Thyroid gland (tissue), 4 donors: ENCODE measurements at regions of chr6 and their contacts with region 1.

Region 1: GRCh38 chr6:3277851-3278416 is 19.2 kb downstream of the PSMG4 start:
- DNase-seq: no peak
- H3K4me3 ChIP-seq: no peak overlapping the region
- H3K27ac ChIP-seq: no peak overlapping the region
- H3K4me1 ChIP-seq: peaks cover 0 to 6% of the 10 kb centered on the region in 2 donors
- H3K27me3 ChIP-seq: no peaks in the 10 kb centered on the region
- CTCF ChIP-seq: no peak
- POLR2A ChIP-seq: no peak

Region 2: GRCh38 chr6:3456755-3457466 is 179.0 kb after region 1 on chr6 and contains the start of gene SLC22A23:
- intact Hi-C with region 1: loop called (anchors 5 kb)
- DNase-seq: peak; percentile 83 to 85
- H3K4me3 ChIP-seq: peak within 1 kb of the TSS; percentile 54 to 69 (median 65)
- H3K27ac ChIP-seq: peak within 1 kb of the TSS in 2 of 3 donors; percentile 12 to 31
- H3K4me1 ChIP-seq: peaks cover 16 to 32% of the 10 kb centered on the region in 2 donors
- H3K27me3 ChIP-seq: no peaks in the 10 kb centered on the region
- CTCF ChIP-seq: peak in 5 of 6 experiments; percentile 58 to 93 (median 72)
- POLR2A ChIP-seq: peak in 1 of 2 donors; percentile 79
- total RNA-seq, gene SLC22A23: 16.6 to 21.8 (median 17.6) TPM

Region 3: GRCh38 chr6:3732345-3733141 is 454.6 kb after region 1 on chr6:
- intact Hi-C with region 1: loop called (anchors 2 kb)
- DNase-seq: peak; percentile 65 to 75
- H3K4me3 ChIP-seq: no peak overlapping the region
- H3K27ac ChIP-seq: peak overlapping the region in 1 of 3 donors; percentile 3
- H3K4me1 ChIP-seq: peaks cover 0 to 19% of the 10 kb centered on the region in 2 donors
- H3K27me3 ChIP-seq: no peaks in the 10 kb centered on the region
- CTCF ChIP-seq: peak; percentile 72 to 86 (median 82)
- POLR2A ChIP-seq: no peak

Region 4: GRCh38 chr6:3990692-3991501 is 713.0 kb after region 1 on chr6:
- intact Hi-C with region 1: loop called (anchors 10 kb)
- DNase-seq: peak; percentile 92 to 93
- H3K4me3 ChIP-seq: peak overlapping the region in 2 of 3 donors; percentile 31 to 34
- H3K27ac ChIP-seq: peak overlapping the region; percentile 84 to 91 (median 90)
- H3K4me1 ChIP-seq: peaks cover 15 to 33% of the 10 kb centered on the region in 2 donors
- H3K27me3 ChIP-seq: no peaks in the 10 kb centered on the region
- CTCF ChIP-seq: peak; percentile 58 to 95 (median 90)
- POLR2A ChIP-seq: peak in 1 of 2 donors; percentile 47